Activated naive CD4-positive, alpha-beta T cell treated with anti-CD3 and anti-CD28 coated beads, Interleukin-2, amount 10 ng/mL, durations not matched to agents 7 days and 5 days (primary cell): ENCODE measurements at regions of chr6 and their contacts with region 1.

Region 1: DNA sequence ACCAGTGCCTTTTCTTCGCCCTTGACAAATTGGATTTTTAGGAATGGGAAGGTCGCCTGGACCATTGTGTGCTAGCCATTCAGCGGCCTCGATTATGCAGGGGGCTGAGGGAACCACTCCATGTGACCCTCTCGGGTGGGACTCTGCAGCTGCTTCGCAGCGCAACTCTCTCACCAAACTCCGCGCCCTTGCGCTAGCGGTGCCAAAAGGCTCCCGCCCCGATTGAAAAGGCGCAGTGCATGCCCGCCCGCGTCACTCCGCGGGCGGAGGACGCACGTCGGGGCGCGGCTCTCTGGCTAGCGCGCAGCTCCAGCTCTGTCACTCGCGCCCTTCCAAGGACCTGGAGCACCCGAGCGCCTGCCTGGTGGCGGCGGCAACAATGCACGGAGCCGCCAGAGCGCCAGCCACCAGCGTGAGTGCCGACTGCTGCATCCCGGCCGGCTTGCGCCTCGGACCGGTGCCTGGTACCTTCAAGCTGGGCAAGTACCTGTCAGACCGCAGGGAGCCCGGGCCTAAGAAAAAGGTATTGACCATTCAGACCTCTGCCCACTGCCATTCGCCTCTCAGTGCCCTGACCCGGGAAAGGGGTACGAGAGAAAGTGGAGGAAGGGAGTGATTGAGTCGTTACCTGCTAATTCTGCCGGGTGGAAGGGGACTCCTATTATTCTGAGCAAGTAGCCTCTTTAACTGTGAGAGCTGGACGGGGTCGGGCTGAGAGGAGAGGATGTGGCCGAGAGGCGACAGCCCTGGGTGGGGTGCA is at the start of gene PRDM13:
- DNase-seq: no peak
- H3K4me3 Mint-ChIP-seq: no peak within 1 kb of the TSS
- H3K27ac Mint-ChIP-seq: peak within 1 kb of the TSS; percentile 72
- H3K4me1 Mint-ChIP-seq: peaks cover 40% of the 10 kb centered on the region
- H3K27me3 Mint-ChIP-seq: peaks cover 98% of the 10 kb centered on the region

Region 2: DNA sequence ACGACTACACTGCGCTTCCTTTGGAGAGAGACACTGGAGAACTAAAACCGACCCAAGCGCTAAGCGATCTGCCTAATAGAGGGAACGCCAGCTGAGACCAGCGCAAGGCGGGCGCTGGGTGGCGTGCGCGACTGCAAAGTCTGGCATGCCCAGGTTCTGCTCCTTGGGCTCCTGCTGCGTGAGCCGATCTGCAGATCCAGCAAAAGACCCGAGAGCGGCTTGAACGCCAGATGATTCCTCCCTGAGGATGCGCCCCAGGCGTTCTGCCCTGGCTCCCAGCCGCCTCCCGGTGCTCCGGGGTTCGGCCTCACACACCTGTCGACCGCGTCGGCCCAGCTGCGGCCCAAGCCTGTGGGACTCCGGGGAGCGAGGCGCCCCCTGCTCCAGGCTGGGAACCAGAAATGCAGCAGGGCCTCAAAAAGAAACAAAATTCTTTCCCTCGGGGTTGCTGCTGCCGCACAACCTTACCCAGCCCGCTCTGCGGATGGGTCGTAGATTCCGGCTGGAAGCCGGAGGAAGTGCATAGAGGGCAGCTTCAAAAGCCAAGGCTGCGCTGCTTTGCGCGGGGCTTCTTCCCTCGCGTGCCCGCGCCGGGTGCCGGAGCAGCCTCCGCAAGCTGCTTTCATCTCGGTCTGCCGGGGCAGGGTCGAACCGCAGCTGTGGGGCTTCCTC is 18.1 kb before region 1 on chr6:
- CTCF ChIA-PET with region 1: interaction called, 17 read pairs
- DNase-seq: peak; percentile 80
- H3K4me3 Mint-ChIP-seq: peak overlapping the region; percentile 78
- H3K27ac Mint-ChIP-seq: no peak overlapping the region
- H3K4me1 Mint-ChIP-seq: peaks cover 37% of the 10 kb centered on the region
- H3K27me3 Mint-ChIP-seq: peaks cover 89% of the 10 kb centered on the region